ENCODE measurements at regions of chr7 and their contacts with region 1.

Region 1: GRCh38 chr7:149050941-149051340 is 22.6 kb upstream of the PDIA4 start:
- DNase-seq: no peak
- H3K4me3 ChIP-seq: no peak overlapping the region
- H3K27ac ChIP-seq: no peak overlapping the region
- H3K4me1 ChIP-seq: no peaks in the 10 kb centered on the region
- H3K27me3 ChIP-seq: no peaks in the 10 kb centered on the region
- CTCF ChIP-seq: no peak
- EP300 ChIP-seq: no peak
- RAD21 ChIP-seq: no peak

Region 2: DNA sequence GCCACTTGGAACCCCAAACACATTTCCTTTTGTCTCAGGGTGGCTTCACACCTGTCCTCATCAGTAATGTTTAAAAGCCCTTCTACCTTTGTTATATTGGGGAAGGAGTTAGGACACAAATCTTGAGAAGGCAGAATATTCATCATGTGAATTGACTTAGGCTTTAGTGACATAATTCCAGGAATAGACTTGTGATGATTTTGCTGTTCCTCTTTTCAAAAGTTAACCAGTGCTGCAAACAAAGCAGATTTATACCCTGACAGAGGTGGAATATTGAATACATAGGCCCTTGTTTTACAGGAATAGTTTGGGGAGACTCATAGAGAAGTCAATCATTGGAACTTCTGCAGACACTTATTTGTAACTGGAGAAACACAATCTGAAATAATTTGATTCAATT is 12.5 kb after region 1 on chr7:
- CTCF ChIA-PET with region 1: interaction called, 22 read pairs
- POLR2A ChIA-PET with region 1: interaction called, 7 read pairs
- DNase-seq: no peak
- H3K4me3 ChIP-seq: no peak overlapping the region
- H3K27ac ChIP-seq: no peak overlapping the region
- H3K4me1 ChIP-seq: no peaks in the 10 kb centered on the region
- H3K27me3 ChIP-seq: no peaks in the 10 kb centered on the region
- CTCF ChIP-seq: no peak
- EP300 ChIP-seq: no peak
- RAD21 ChIP-seq: no peak